CD4-positive, alpha-beta memory T cell (primary cell): ENCODE measurements at regions of chr3 and their contacts with region 1.

Region 1: GRCh38 chr3:119034256-119035013 is at the start of gene IGSF11:
- DNase-seq: peak; percentile 47 to 68 (median 62)
- H3K4me3 ChIP-seq: peak within 1 kb of the TSS in 1 of 2 donors; percentile 51
- H3K4me3 Mint-ChIP-seq: peak within 1 kb of the TSS; percentile 81 to 93 (median 86)
- H3K27ac ChIP-seq: no peak within 1 kb of the TSS
- H3K27ac Mint-ChIP-seq: peak within 1 kb of the TSS in 1 of 7 donors; percentile 43
- H3K4me1 ChIP-seq: peaks cover 4% of the 10 kb centered on the region
- H3K4me1 Mint-ChIP-seq: peaks cover 0 to 11% (median 4%) of the 10 kb centered on the region in 4 donors
- H3K27me3 ChIP-seq: peaks cover 15% of the 10 kb centered on the region
- H3K27me3 Mint-ChIP-seq: peaks cover 19 to 36% of the 10 kb centered on the region in 2 donors
- total RNA-seq, gene IGSF11: 0.22 to 0.44 TPM

Region 2: DNA sequence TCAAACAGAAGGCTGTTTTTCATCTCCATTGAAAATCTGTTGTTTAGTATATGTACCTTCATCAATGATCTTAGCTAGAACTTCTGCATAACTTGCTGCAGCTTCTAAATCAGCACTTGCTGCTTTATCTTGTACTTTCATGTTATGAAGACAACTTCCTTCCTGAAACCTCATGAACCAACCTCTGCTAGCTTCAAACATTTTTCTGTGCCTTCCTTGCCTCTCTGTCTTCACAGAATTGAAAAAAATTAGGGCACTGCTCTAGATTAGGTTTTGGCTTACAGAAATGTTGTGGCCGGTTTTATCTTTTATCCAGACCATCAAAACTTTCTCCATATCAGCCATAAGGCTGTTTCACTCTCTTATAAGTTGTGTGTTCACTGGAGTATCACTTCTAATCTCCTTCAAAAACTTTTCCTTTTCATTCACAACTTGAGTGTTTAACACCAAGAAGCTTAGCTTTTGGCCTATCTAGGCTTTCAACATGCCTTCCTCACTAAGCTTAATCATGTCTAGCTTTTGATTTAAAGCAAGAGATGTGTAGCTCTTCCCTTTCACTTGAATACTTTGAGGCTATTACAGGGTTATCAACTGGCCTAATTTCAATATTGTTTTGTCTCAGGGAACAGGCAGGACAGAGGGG is 78.4 kb before region 1 on chr3:
- CTCF ChIA-PET with region 1: interaction called, 12 read pairs
- POLR2A ChIA-PET with region 1: interaction called, 3 read pairs
- intact Hi-C with region 1: loop called (anchors 5 kb)
- DNase-seq: peak in 4 of 5 donors; percentile 50 to 57 (median 52)
- H3K4me3 ChIP-seq: no peak overlapping the region
- H3K4me3 Mint-ChIP-seq: peak overlapping the region; percentile 2 to 62 (median 55)
- H3K27ac ChIP-seq: no peak overlapping the region
- H3K27ac Mint-ChIP-seq: peak overlapping the region; percentile 25 to 90 (median 70)
- H3K4me1 ChIP-seq: peaks cover 39% of the 10 kb centered on the region
- H3K4me1 Mint-ChIP-seq: peaks cover 22 to 46% (median 37%) of the 10 kb centered on the region in 4 donors
- H3K27me3 ChIP-seq: no peaks in the 10 kb centered on the region
- H3K27me3 Mint-ChIP-seq: no peaks in the 10 kb centered on the region

Region 3: DNA sequence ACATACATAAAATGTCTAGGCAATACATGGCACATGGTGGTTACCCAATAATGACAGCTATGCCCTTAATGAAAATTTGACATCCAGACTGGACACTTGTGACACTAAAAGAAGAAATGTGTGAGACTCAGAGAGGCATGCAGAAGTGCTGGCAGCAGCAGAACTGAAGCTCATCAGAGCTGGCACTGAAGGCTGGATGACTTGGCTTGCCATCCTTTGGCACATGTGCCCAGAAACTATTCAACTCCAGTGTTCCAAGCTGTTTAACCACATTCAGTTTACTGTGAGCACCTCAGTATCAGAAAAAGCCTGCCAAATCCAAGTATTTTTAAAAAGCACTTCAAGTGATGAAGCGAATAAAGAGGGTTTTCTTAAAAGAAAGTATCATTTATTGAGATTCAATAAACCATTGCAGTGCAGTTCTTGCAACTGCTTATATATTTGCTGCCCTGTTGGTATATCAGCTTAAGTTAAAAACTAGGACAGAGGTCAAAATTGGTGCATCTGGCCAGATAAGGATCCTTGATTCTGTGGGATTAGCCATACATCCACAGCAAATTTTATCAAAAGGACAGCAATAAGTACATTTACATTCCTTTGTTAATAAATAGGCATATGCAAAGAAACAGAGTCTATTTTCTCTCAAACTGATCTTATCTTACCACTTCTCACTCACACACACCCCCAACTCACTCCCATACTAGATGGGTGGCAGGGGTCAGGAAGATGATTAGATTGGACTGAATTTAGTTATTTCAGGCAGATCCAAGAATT is 15.6 kb before region 1 on chr3:
- CTCF ChIA-PET with region 1: interaction called, 17 read pairs
- POLR2A ChIA-PET with region 1: no interaction called
- intact Hi-C with region 1: no loop called
- DNase-seq: no peak
- H3K4me3 ChIP-seq: no peak overlapping the region
- H3K4me3 Mint-ChIP-seq: no peak overlapping the region
- H3K27ac ChIP-seq: no peak overlapping the region
- H3K27ac Mint-ChIP-seq: no peak overlapping the region
- H3K4me1 ChIP-seq: no peaks in the 10 kb centered on the region
- H3K4me1 Mint-ChIP-seq: peaks cover 0 to 2% (median under 1%) of the 10 kb centered on the region in 4 donors
- H3K27me3 ChIP-seq: no peaks in the 10 kb centered on the region
- H3K27me3 Mint-ChIP-seq: peaks cover 0 to 1% of the 10 kb centered on the region in 2 donors